ENCODE measurements at regions of chr6 and their contacts with region 1.

Region 1: GRCh38 chr6:138944412-138944811 is 43.6 kb downstream of the REPS1 start:
- DNase-seq: peak; percentile 21
- H3K4me3 Mint-ChIP-seq: peak overlapping the region; percentile 17
- H3K27ac Mint-ChIP-seq: peak overlapping the region; percentile 53
- H3K4me1 Mint-ChIP-seq: peaks cover 63% of the 10 kb centered on the region
- H3K27me3 Mint-ChIP-seq: no peaks in the 10 kb centered on the region

Region 2: DNA sequence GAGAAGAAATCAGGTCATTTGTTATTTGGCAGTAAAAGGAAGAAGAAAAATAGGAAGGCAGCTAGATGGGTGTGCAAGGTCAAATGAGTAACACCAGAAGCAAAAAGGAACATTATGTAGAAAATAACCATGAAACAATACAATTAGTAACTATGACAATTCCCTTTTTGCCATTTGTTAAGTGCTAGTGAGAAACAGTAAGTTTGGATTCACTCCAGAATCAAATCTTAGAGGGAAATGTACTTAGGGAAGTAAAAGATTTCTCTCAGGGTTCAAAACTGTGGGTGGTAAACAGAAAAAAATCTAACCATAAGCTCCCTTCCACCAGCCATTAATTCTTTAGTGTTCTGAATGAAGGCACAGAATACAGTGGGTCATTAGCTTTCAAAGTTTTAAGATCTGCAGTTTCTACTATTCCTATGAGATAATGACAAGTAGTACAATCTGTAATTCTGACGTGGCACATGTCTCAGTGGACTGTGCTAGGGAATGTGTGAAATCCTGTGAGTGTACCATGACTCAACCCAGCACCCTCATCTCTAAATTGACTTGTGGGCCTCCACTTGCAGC is 26.5 kb after region 1 on chr6:
- intact Hi-C with region 1: loop called (anchors 2 kb)
- DNase-seq: no peak
- H3K4me3 Mint-ChIP-seq: no peak overlapping the region
- H3K27ac Mint-ChIP-seq: no peak overlapping the region
- H3K4me1 Mint-ChIP-seq: peaks cover 56% of the 10 kb centered on the region
- H3K27me3 Mint-ChIP-seq: no peaks in the 10 kb centered on the region

Region 3: DNA sequence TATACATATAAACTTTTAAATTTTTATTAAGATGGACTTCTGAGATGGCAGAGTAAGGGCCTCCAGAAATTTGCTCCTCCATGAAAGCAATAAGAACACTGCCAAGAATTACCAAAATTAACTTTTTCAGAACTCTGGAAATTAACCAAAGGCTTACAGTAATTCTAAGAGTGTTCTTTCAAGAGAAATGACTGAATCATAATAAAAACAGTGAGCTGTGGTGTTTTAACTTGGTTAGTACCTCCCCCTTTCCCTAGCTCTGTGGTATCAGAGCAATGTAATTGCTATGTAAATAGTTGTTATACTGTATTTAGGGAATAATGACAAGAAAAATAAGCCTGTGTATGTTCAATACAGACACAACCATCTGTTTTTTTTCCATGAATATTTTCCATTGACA is 209.4 kb after region 1 on chr6:
- intact Hi-C with region 1: loop called (anchors 5 kb)
- DNase-seq: no peak
- H3K4me3 Mint-ChIP-seq: peak overlapping the region; percentile 66
- H3K27ac Mint-ChIP-seq: peak overlapping the region; percentile 90
- H3K4me1 Mint-ChIP-seq: peaks cover 73% of the 10 kb centered on the region
- H3K27me3 Mint-ChIP-seq: no peaks in the 10 kb centered on the region

Measured in activated T-helper 1 cell treated with anti-CD3 and anti-CD28 coated beads, Interleukin-12 subunit alpha, Interleukin-12 subunit beta, Interleukin-2, Interleukin-4 antibody, amounts not matched to agents 30 ng/mL and 10 ng/mL and 1 ng/mL, durations not matched to agents 14 hours and 24 hours and 36 hours (primary cell).